Calu3 (cell line): ENCODE measurements at regions of chr15 and their contacts with region 1.

Region 1: GRCh38 chr15:96893159-96893906 is 562.8 kb downstream of the NR2F2 start:
- DNase-seq: peak; percentile 61
- H3K4me3 Mint-ChIP-seq: peak overlapping the region; percentile 60
- H3K27ac Mint-ChIP-seq: peak overlapping the region; percentile 68
- H3K4me1 Mint-ChIP-seq: peaks cover 20% of the 10 kb centered on the region
- H3K27me3 Mint-ChIP-seq: no peaks in the 10 kb centered on the region
- CTCF ChIP-seq: peak; percentile 69

Region 2: DNA sequence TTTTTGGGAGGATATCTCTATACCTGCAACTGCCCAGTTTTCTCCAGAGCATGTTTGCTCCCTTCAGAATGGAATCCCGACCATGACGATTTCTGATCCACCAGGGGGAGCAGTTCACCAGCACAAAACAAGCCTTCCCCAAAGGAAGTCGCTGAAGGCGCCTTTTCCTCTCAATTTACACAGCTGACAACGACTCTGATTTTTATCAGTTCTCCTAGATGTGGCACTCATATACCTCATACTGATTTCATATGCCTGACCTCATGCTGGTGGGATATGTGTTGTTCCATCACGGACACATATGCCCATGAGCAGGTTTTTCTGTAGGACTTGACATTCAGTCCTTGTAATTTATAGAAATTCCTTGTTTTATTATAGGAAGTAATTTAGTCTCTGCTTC is 1633.8 kb before region 1 on chr15:
- CTCF ChIA-PET with region 1: no interaction called
- intact Hi-C with region 1: loop called (anchors 1 kb)
- DNase-seq: peak; percentile 78
- H3K4me3 Mint-ChIP-seq: peak overlapping the region; percentile 15
- H3K27ac Mint-ChIP-seq: no peak overlapping the region
- H3K4me1 Mint-ChIP-seq: peaks cover 26% of the 10 kb centered on the region
- H3K27me3 Mint-ChIP-seq: no peaks in the 10 kb centered on the region
- CTCF ChIP-seq: peak; percentile 85

Region 3: GRCh38 chr15:96330450-96331145 is 562.7 kb before region 1 on chr15 and contains the start of gene NR2F2:
- CTCF ChIA-PET with region 1: interaction called, 17 read pairs
- intact Hi-C with region 1: no loop called
- DNase-seq: peak; percentile 98
- H3K4me3 Mint-ChIP-seq: no peak within 1 kb of the TSS
- H3K27ac Mint-ChIP-seq: peak within 1 kb of the TSS; percentile 98
- H3K4me1 Mint-ChIP-seq: peaks cover 22% of the 10 kb centered on the region
- H3K27me3 Mint-ChIP-seq: no peaks in the 10 kb centered on the region
- CTCF ChIP-seq: no peak
- total RNA-seq, gene NR2F2: 158 and 167 TPM in 2 replicates

Region 4: GRCh38 chr15:96585484-96586386 is 307.6 kb before region 1 on chr15:
- CTCF ChIA-PET with region 1: interaction called, 4 read pairs
- intact Hi-C with region 1: loop called (anchors 2 kb)
- DNase-seq: no peak
- H3K4me3 Mint-ChIP-seq: no peak overlapping the region
- H3K27ac Mint-ChIP-seq: no peak overlapping the region
- H3K4me1 Mint-ChIP-seq: peaks cover 9% of the 10 kb centered on the region
- H3K27me3 Mint-ChIP-seq: no peaks in the 10 kb centered on the region
- CTCF ChIP-seq: peak; percentile 44

Region 5: DNA sequence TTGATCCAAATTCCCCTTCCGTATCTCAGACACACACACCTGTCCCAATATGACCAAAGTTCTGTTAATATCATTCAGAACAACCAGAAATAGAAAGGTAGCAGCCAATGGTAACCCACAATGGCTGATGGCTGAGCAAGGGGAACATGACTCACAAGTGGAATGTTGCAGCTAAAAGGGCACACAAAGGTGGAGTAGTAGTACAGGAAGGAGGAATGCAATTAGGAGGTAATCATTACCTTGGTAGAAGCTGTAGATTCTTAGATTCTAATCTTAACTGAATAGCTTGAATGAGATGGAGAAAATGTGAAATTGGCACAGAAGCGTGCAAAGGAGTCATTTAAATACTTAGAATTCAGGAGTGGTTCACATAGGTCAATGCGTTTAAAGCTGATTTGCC is 214.9 kb before region 1 on chr15:
- CTCF ChIA-PET with region 1: no interaction called
- intact Hi-C with region 1: loop called (anchors 2 kb)
- DNase-seq: peak; percentile 72
- H3K4me3 Mint-ChIP-seq: no peak overlapping the region
- H3K27ac Mint-ChIP-seq: peak overlapping the region; percentile 62
- H3K4me1 Mint-ChIP-seq: peaks cover 19% of the 10 kb centered on the region
- H3K27me3 Mint-ChIP-seq: no peaks in the 10 kb centered on the region
- CTCF ChIP-seq: no peak

Region 6: GRCh38 chr15:97234851-97235610 is 341.7 kb after region 1 on chr15:
- CTCF ChIA-PET with region 1: interaction called, 4 read pairs
- intact Hi-C with region 1: loop called (anchors 2 kb)
- DNase-seq: peak; percentile 76
- H3K4me3 Mint-ChIP-seq: peak overlapping the region; percentile 31
- H3K27ac Mint-ChIP-seq: peak overlapping the region; percentile 60
- H3K4me1 Mint-ChIP-seq: peaks cover 26% of the 10 kb centered on the region
- H3K27me3 Mint-ChIP-seq: no peaks in the 10 kb centered on the region
- CTCF ChIP-seq: peak; percentile 95